HEK293 (cell line): ENCODE measurements at regions of chr1 and their contacts with region 1.

Region 1: DNA sequence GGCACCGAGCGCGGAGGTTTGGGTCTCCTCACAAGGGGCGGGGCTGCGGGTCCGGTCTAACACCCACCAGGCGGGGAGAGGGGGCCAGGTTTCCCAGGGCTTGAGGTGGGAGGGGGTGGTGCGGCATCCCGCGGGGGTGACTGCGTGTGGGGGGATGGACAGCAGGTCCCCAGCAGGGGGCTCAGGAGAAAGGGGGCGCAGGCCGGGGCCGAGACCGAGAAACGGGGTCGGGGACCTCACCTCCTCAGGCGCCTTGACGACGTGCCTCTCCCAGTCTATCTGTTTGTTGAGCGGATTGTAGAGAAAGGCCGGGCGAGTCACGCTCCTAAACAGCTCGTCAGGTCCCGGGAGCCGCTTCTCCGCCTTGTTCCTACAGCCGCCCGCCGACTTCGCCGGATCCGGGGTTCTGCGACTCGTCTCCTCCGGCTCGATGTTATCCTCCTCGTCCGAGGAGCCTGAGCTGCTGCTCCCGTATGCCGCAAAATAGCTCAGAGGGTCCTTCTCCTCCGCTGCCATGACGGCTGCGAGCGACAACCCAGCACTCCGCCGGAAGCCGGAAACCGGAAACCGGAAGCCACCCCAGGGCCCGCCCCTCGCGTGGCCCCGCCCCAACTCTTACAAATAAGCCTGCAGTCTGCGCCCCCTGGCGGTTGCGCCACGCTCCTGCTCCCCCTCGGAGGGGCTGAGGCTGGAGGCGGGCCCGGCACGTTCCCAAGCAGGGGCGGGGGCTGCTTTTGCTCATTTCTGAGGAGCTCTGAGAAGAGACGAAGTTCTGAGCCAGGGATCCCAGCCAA is at the start of gene C1orf52:
- H3K4me3 ChIP-seq: peak within 1 kb of the TSS; percentile 94
- H3K27ac ChIP-seq: peak within 1 kb of the TSS; percentile 67
- H3K4me1 ChIP-seq: 0 out of 2 replicates have a peak, but pooled peaks cover 2% of the 10 kb centered on the region
- CTCF ChIP-seq: peak; percentile 78

Region 2: GRCh38 chr1:84550826-84551225 is 708.5 kb before region 1 on chr1:
- CTCF ChIA-PET with region 1: no interaction called
- POLR2A ChIA-PET with region 1: interaction called, 13 read pairs
- H3K4me3 ChIP-seq: no peak overlapping the region
- H3K27ac ChIP-seq: no peak overlapping the region
- H3K4me1 ChIP-seq: no peaks in the 10 kb centered on the region
- CTCF ChIP-seq: no peak

Region 3: DNA sequence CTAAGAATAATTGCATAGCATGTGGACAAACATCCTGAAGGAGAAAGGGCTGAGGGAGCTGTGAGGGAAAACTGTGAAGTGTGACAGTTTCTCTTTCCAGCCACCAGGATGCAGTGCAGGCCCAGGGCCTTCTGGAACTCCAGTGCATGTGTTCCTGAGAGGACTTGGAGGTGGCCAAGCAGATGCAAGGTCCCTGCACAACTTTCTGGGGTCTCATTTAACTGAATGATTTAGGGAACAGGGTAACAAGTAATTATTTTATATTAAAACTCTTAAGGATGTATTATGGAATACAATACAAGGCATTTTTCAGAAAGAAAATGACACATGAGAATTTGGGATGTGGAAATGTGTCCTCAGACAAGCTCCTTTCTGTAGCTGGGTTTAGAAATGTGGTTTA is 149.8 kb before region 1 on chr1:
- CTCF ChIA-PET with region 1: interaction called, 197 read pairs
- POLR2A ChIA-PET with region 1: interaction called, 8 read pairs
- H3K4me3 ChIP-seq: no peak overlapping the region
- H3K27ac ChIP-seq: no peak overlapping the region
- H3K4me1 ChIP-seq: no peaks in the 10 kb centered on the region
- CTCF ChIP-seq: peak; percentile 74

Region 4: DNA sequence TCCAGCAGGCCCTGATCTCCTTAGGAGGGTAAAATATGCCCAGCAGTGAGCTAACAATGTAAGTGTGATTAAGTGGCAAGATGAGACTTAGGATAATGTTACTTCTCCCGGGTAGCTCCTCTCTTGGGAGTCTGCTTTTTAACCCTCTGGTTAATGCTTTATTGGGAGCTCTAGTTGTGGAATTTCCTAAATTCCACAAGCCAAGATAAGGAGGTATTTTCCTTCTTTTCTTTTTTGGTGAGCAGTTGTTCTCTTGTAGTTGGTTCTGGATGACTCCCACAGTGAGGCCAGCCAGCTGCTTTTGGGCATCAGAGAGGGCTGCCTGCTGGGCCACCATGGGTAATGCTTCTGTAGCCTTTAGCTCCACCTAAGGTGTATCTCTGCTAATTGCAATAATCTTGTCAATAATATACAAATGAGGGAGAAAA is 19.1 kb before region 1 on chr1:
- CTCF ChIA-PET with region 1: interaction called, 15 read pairs
- POLR2A ChIA-PET with region 1: interaction called, 6 read pairs
- H3K4me3 ChIP-seq: no peak overlapping the region
- H3K27ac ChIP-seq: no peak overlapping the region; the same call in 1 of the 2 replicates
- H3K4me1 ChIP-seq: peaks cover 11% of the 10 kb centered on the region
- CTCF ChIP-seq: peak; percentile 41; the same call in 1 of the 2 replicates

Region 5: DNA sequence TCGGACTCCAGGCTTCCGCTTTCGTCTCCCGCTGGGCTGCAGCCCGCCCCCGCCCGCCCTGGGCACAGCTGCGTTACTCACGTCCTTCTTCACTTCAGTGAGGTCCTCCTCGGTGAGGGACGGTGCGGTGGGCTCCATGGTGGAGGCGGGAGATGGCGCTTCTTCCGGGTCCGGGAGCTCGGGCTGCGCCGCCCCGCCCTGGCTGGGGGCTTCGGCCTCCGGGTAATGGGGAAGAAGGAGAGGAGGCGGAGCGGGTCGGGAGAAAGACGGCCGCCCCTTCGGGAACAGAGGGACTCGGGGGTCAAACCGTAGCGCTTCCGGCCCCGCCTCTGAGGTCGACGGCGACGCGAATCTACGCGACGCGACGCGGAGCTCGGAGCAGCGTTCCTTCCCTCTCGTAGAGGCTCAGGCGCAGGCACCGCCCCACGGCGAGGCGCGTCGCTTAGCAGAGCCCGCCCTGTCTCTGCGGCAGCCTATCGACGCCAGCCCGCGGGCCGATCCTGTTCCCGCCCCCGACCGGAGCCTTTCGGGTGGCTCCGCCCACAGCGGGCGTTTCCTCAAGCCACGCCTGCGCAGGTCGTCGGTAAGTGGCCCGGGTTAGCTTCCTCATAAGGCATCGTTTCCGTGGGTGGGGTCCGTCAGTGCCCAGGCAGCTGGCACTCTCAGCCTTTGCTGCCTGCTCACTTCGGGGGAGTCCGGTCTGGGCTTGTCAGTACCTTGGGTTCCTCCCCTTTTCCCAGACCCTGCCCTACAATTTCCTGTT is 17.1 kb after region 1 on chr1 and contains the start of gene BCL10:
- CTCF ChIA-PET with region 1: interaction called, 45 read pairs
- POLR2A ChIA-PET with region 1: interaction called, 30 read pairs
- H3K4me3 ChIP-seq: peak within 1 kb of the TSS; percentile 89
- H3K27ac ChIP-seq: peak within 1 kb of the TSS; percentile 91
- H3K4me1 ChIP-seq: peaks cover 8% of the 10 kb centered on the region
- CTCF ChIP-seq: no peak

Region 6: GRCh38 chr1:85297855-85298629 is 38.7 kb after region 1 on chr1:
- CTCF ChIA-PET with region 1: interaction called, 4 read pairs
- POLR2A ChIA-PET with region 1: interaction called, 12 read pairs
- H3K4me3 ChIP-seq: no peak overlapping the region; the same call in 1 of the 2 replicates
- H3K27ac ChIP-seq: peak overlapping the region; percentile 76
- H3K4me1 ChIP-seq: peaks cover 18% of the 10 kb centered on the region
- CTCF ChIP-seq: no peak

Region 7: DNA sequence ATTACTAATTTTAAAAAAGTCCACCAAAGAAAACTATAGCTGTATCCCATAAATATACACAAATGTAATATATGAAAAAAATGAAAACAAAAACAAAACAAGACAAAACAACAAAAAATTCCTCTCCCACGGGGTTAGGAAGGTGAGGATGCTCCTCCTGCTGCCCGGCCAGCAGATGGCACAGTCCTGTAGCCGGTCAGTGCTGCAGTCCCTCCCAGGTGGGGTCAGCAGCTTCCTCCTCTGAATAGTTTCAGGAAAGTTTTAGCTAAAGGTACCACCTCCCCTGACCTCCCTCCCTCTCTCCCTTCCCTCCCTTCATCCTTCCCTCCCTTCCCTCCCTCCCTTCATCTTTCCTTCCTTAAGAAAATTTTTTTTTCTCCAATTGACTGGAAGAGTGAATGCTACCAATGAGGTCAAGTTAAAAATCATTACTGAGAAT is 85.0 kb after region 1 on chr1:
- CTCF ChIA-PET with region 1: no interaction called
- POLR2A ChIA-PET with region 1: no interaction called
- H3K4me3 ChIP-seq: no peak overlapping the region
- H3K27ac ChIP-seq: no peak overlapping the region
- H3K4me1 ChIP-seq: peaks cover 21% of the 10 kb centered on the region
- CTCF ChIP-seq: peak; percentile 78